Panc1 (cell line): ENCODE measurements at regions of chr15 and their contacts with region 1.

Region 1: GRCh38 chr15:46312133-46312740 is 677.4 kb downstream of the SQOR start:
- DNase-seq: peak; percentile 36
- ATAC-seq: peak; percentile 96
- H3K4me3 ChIP-seq: no peak overlapping the region
- H3K27ac ChIP-seq: no peak overlapping the region
- H3K4me1 ChIP-seq: no peaks in the 10 kb centered on the region
- H3K27me3 ChIP-seq: no peaks in the 10 kb centered on the region
- CTCF ChIP-seq: peak; percentile 90

Region 2: GRCh38 chr15:46502668-46503067 is 190.4 kb after region 1 on chr15:
- CTCF ChIA-PET with region 1: no interaction called
- POLR2A ChIA-PET with region 1: no interaction called
- in situ Hi-C with region 1: no loop called
- intact Hi-C with region 1: loop called (anchors 10 kb)
- DNase-seq: no peak
- ATAC-seq: no peak
- H3K4me3 ChIP-seq: no peak overlapping the region
- H3K27ac ChIP-seq: no peak overlapping the region
- H3K4me1 ChIP-seq: no peaks in the 10 kb centered on the region
- H3K27me3 ChIP-seq: no peaks in the 10 kb centered on the region
- CTCF ChIP-seq: peak; percentile 25; the same call in 1 of the 2 replicates

Region 3: DNA sequence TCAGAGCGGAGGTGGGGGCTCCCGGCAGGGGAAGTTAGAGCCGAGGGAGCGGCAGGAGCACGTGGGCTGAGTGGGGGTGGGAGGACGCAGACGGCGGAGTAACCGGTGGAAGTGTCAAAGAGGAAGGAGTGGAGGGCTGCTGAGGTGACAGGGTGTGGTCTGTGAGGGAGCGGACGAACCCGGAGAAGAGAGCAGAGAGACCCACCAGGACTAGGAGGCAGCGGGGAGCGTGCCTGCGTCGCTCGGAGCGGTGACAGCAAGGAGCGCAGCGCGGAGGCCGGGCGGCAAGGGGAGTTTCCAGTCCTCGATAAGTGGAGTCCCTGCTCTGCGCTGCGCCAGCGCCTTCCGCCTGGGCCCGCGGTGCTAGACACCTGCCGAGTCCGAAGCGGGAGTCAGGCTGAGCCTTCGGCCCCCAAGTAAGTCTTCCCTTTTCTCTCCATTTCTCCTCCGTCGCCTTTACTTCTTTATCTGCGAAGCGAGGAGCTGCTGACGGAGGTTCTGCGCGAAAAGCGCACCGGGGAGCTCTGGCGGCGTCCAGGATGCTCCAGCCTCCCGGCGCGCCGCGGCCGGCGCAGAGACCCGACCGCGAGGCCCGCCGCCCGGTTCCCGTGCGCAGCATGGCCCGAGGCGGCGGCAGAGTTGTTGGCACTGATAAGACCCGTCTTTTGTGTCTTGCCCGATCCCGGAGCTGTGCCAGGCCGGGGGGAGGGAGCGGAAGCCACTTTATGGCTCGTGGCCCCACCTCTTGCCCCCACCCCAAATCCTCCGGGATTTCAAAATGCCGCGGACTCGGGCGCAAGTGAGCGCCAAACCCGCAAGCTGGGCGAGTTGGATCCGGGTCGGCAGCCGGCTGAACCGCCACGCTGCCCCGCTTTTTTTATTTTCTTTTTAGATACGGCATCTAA is 872.0 kb after region 1 on chr15:
- CTCF ChIA-PET with region 1: no interaction called
- POLR2A ChIA-PET with region 1: no interaction called
- in situ Hi-C with region 1: no loop called
- intact Hi-C with region 1: loop called (anchors 10 kb)
- DNase-seq: no peak
- ATAC-seq: peak; percentile 72
- H3K4me3 ChIP-seq: peak overlapping the region; percentile 28 to 36
- H3K27ac ChIP-seq: no peak overlapping the region
- H3K4me1 ChIP-seq: no peaks in the 10 kb centered on the region
- H3K27me3 ChIP-seq: peaks cover 5% of the 10 kb centered on the region; the same call in 1 of the 2 replicates
- CTCF ChIP-seq: no peak

Region 4: GRCh38 chr15:47987908-47988532 is 1675.8 kb after region 1 on chr15:
- CTCF ChIA-PET with region 1: no interaction called
- POLR2A ChIA-PET with region 1: no interaction called
- in situ Hi-C with region 1: no loop called
- intact Hi-C with region 1: loop called (anchors 10 kb)
- DNase-seq: peak; percentile 8
- ATAC-seq: peak; percentile 89
- H3K4me3 ChIP-seq: no peak overlapping the region
- H3K27ac ChIP-seq: no peak overlapping the region
- H3K4me1 ChIP-seq: no peaks in the 10 kb centered on the region
- H3K27me3 ChIP-seq: no peaks in the 10 kb centered on the region
- CTCF ChIP-seq: peak; percentile 77